Sigmoid colon (tissue), 7 donors: ENCODE measurements at regions of chrX and their contacts with region 1.

Region 1: GRCh38 chrX:71254092-71254941 is at the start of gene ZMYM3:
- DNase-seq: peak; percentile 93
- H3K4me3 ChIP-seq: peak within 1 kb of the TSS; percentile 53 to 70 (median 66)
- H3K27ac ChIP-seq: peak within 1 kb of the TSS; percentile 85 to 93 (median 89)
- H3K4me1 ChIP-seq: peaks cover 0 to 16% (median 12%) of the 10 kb centered on the region in 4 donors
- H3K27me3 ChIP-seq: no peaks in the 10 kb centered on the region
- CTCF ChIP-seq: no peak
- EP300 ChIP-seq: no peak
- POLR2A ChIP-seq: peak in 1 of 2 donors; percentile 32
- total RNA-seq, gene ZMYM3: 12.4 to 23.5 (median 14.6) TPM

Region 2: GRCh38 chrX:71283403-71284143 is 29.3 kb after region 1 on chrX and contains the start of gene NONO:
- intact Hi-C with region 1: loop called (anchors 2 kb)
- DNase-seq: peak; percentile 94
- H3K4me3 ChIP-seq: peak within 1 kb of the TSS; percentile 50 to 63 (median 62)
- H3K27ac ChIP-seq: peak within 1 kb of the TSS; percentile 85 to 95 (median 89)
- H3K4me1 ChIP-seq: peaks cover 0 to 29% (median 11%) of the 10 kb centered on the region in 4 donors
- H3K27me3 ChIP-seq: no peaks in the 10 kb centered on the region
- CTCF ChIP-seq: peak in 1 of 4 experiments; percentile 19
- EP300 ChIP-seq: no peak
- POLR2A ChIP-seq: peak; percentile 78 to 80
- total RNA-seq, gene NONO: 170 to 214 (median 194) TPM